ENCODE measurements at regions of chr12 and their contacts with region 1.

Region 1: GRCh38 chr12:3202734-3203446 is 125.7 kb downstream of the TSPAN9 start:
- DNase-seq: peak; percentile 49
- H3K4me3 ChIP-seq: no peak overlapping the region
- H3K27ac ChIP-seq: no peak overlapping the region
- H3K4me1 ChIP-seq: no peaks in the 10 kb centered on the region
- CTCF ChIP-seq: peak; percentile 97

Region 2: GRCh38 chr12:2877047-2877952 is 325.6 kb before region 1 on chr12 and contains the starts of genes FOXM1 and RHNO1:
- CTCF ChIA-PET with region 1: no interaction called
- POLR2A ChIA-PET with region 1: no interaction called
- intact Hi-C with region 1: no loop called
- DNase-seq: peak; percentile 90
- H3K4me3 ChIP-seq: peak within 1 kb of the TSS; percentile 76
- H3K27ac ChIP-seq: peak within 1 kb of the TSS; percentile 76
- H3K4me1 ChIP-seq: peaks cover 29% of the 10 kb centered on the region
- CTCF ChIP-seq: no peak
- total RNA-seq, gene FOXM1: 91.7 and 109 TPM in 2 replicates
- total RNA-seq, gene RHNO1: 35.4 and 48.3 TPM in 2 replicates

Region 3: DNA sequence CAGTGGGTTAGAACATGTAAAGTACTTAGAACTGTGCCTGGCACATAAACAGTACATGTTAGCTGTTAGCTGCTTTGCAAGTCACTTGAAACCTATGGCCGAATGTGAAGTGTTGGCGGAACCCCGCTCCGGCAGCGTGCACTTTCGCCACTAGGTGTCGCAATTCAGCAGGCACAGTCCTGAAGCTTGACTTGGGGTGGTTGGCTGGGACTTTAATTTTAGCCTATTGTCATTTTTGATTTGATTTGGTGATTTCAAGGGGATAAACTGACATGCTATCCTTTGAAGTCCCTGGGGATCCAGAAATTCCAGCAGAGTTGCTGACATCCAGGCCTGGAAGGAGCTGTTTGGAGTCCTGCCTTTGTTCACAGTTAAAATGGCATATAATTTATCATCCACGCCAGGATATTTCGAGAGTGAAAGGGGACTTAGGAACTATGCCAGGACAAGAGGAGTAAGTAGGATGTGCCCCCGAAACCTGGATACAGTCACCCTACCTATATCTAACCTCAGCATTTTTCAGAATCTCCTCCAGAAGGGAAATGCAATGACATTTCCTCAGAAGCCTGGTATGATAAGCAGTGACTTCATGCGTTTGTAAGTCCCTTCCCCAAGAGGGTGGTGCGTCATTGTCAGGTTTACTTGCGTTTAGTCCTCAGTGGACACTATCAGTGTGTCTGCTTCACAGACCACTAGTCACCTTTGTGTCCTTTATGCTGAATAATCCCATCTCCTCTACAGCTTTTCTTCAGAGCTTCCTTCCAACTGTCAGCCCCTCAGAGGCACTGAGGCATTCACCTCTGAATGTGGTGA is 129.2 kb before region 1 on chr12:
- CTCF ChIA-PET with region 1: interaction called, 4 read pairs
- POLR2A ChIA-PET with region 1: no interaction called
- intact Hi-C with region 1: loop called (anchors 5 kb)
- DNase-seq: peak; percentile 78
- H3K4me3 ChIP-seq: no peak overlapping the region
- H3K27ac ChIP-seq: no peak overlapping the region
- H3K4me1 ChIP-seq: no peaks in the 10 kb centered on the region
- CTCF ChIP-seq: peak; percentile 99

Region 4: GRCh38 chr12:3135522-3136461 is 67.1 kb before region 1 on chr12:
- CTCF ChIA-PET with region 1: no interaction called
- POLR2A ChIA-PET with region 1: no interaction called
- intact Hi-C with region 1: loop called (anchors 1 kb)
- DNase-seq: peak; percentile 70
- H3K4me3 ChIP-seq: no peak overlapping the region
- H3K27ac ChIP-seq: no peak overlapping the region
- H3K4me1 ChIP-seq: no peaks in the 10 kb centered on the region
- CTCF ChIP-seq: peak; percentile 85

Region 5: DNA sequence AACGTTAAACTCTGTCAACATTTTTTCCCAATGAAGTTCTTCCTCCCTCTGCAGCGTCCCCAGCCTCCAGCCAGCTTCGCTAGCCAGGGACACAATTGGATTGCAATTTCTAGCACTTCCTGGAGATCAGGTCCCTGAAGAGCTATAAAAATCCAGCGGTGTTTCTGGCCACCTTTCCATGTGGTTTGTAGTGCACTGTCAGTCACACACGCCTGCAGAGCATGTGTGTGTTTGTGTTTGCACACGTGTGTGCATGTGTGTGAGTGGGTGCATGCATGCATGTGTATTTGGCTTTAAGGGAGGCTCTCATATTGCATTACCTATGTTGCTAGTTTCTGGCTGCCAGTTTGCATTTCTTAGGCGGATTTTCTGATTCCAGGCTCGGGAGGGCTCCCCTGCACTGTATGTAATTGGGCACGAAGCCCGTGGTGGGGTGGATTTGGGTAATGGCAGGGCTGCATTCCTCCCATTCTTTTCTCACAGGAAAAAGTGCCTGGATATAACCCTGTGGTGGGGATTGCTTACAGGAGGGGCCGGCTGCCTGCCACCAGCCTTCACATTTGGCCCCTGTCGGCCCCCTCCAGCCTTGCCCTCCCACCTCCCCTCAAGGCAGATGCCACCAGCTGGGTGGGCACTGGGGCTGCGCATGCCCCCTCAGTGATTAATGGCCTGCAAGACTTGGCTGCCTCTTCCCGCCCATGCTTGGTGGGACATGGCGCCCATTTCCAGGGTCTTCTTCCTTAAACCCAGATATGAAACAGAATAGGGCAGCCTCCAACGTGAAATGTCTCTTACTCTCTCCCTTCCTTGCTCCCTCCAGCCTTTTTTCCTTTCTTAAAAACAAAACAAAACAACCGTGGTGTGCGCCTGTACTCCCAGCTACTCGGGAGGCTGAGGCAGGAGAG is 51.7 kb before region 1 on chr12:
- CTCF ChIA-PET with region 1: no interaction called
- POLR2A ChIA-PET with region 1: no interaction called
- intact Hi-C with region 1: no loop called
- DNase-seq: no peak
- H3K4me3 ChIP-seq: no peak overlapping the region
- H3K27ac ChIP-seq: no peak overlapping the region
- H3K4me1 ChIP-seq: no peaks in the 10 kb centered on the region
- CTCF ChIP-seq: no peak

Region 6: DNA sequence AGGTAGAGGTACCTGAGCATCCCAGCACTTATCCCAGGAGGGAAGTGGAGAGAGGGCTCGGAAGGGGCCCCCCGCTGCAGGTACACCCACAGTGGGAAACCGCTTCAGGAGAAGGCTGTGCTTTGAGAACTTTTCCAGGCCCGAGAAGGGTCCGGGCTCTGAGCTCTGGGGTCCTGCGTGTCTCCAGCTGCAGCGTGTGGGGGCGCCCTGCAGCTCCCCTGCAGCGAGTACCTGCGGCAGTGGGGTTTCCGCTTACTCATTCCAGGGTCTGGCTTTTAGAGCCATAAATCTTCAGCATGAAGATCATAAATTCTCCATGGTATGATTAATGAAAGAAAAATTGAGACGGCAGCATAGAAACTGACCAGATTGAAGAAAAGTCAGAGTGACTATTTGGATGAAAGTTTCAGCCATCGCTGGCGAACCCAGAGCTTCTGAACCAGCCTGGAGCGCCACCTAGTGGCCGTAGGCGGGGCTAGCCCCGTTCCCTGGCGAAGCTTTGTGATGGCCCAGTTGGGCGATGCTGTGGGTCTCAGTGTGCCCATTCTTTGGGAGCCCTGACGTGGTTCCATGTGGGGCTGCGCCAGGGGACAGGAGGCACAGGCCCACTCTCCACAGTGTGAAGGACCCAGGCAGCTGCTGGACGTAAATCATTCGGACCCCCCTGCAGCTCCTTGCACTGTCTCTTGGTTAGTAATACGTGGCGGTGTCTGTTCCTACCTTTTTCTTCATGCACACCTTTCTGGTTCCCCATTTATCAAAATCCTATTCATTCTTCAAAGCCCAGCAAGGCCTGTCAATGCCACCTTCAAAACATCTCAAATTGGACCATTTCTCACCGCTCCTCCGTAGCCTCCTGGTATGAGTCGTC is 72.5 kb after region 1 on chr12:
- CTCF ChIA-PET with region 1: interaction called, 7 read pairs
- POLR2A ChIA-PET with region 1: no interaction called
- intact Hi-C with region 1: loop called (anchors 1 kb)
- DNase-seq: peak; percentile 76
- H3K4me3 ChIP-seq: peak overlapping the region; percentile 15
- H3K27ac ChIP-seq: no peak overlapping the region
- H3K4me1 ChIP-seq: no peaks in the 10 kb centered on the region
- CTCF ChIP-seq: peak; percentile 95

Measured in OCI-LY7 (cell line).